Heart right ventricle (tissue), 16 donors: ENCODE measurements at regions of chr5 and their contacts with region 1.

Region 1: DNA sequence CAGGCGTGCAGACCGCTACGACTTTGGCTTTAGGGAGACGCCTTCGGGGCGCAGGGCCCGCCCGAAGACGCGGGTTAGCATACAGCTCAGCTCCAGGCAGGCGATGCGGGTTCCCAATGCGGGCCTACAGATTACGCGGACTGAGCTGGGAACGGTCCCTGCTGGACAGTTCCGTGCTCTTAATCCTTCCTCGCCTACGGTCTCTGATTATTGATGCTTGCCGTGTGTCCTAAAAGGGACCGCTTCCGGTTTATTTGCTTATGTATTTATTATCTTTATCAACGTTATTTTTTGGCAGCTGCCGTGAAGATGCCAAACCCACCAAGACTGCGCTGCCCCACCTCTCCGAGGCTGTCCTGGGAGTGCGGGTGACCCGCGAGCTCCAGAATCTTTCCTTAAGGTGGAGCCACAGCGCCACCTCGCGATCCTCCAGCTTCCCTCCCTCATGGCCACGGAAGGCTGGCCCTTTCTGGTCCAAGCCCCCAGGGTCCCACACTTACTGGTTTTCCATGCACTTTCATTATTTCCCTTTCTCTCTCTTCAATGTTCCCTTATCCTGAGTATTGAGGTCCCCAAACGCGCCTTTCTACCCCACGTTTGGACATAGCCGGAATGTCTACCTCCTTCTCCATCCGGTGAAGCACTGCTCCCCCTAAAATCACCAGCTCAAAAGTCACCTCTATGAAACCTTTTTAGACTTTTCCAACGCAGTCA is 7.0 kb upstream of the EBF1 start:
- DNase-seq: peak; percentile 81 to 85
- ATAC-seq: peak; percentile 84 to 93 (median 90)
- H3K4me3 ChIP-seq: peak overlapping the region in 9 of 10 donors; percentile 1 to 55 (median 41)
- H3K27ac ChIP-seq: peak overlapping the region in 4 of 10 donors; percentile 1 to 35 (median 20)
- H3K4me1 ChIP-seq: peaks cover 0 to 51% (median 27%) of the 10 kb centered on the region in 9 donors
- H3K27me3 ChIP-seq: peaks cover 4 to 82% (median 48%) of the 10 kb centered on the region in 7 donors
- CTCF ChIP-seq: peak; percentile 71 to 97 (median 96)

Region 2: DNA sequence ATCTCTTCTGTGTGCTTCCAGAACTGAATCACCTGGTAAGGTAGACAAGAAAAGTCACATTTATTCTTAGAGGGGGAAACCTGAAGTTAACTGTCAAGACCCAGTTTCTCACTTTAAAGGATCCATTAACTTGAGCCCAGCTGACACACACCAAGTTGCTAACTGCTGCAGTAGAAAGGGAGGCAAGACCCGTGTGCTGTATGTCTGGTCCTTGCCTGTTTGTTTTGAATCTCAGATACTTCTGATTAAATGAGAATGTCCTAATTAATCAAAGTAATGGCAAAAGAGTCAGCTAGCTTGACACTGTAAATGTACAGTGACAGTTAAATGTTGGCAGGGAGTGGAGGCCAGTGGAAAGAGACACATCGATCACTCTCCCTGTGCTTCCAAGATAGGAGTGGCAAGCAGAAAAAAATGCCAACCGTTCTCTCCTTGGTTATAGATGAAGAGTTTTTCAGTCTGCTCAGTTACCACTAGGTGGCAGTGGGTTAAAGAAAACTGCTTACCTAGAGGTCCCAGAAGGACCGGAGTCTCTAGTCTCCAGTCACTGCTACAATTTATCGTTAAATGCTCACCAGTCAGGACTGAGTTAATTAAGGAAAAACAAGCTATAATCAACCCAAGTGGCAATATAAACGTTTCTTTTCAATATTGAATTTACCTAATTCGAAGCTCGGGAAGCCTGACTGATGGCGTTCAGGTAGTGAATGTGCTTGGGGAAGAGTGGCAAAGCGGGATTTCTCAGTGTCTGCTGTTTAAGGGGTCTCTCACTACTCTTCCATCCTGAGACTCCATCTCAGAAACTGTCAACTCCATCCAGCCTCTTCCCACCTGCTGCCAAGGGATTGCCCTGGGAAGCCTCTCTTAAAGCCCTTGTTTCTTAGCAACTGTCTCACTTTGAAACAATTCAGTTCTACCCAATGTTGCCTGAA is 1344.8 kb before region 1 on chr5:
- intact Hi-C with region 1: loop called in 1 of 10 experiments (anchors 10 kb)
- DNase-seq: peak in 1 of 2 donors; percentile 35
- ATAC-seq: peak; percentile 42 to 89 (median 68)
- H3K4me3 ChIP-seq: no peak overlapping the region
- H3K27ac ChIP-seq: no peak overlapping the region
- H3K4me1 ChIP-seq: peaks cover 0 to 5% (median 0%) of the 10 kb centered on the region in 9 donors
- H3K27me3 ChIP-seq: no peaks in the 10 kb centered on the region
- CTCF ChIP-seq: peak; percentile 46 to 85 (median 81)

Region 3: DNA sequence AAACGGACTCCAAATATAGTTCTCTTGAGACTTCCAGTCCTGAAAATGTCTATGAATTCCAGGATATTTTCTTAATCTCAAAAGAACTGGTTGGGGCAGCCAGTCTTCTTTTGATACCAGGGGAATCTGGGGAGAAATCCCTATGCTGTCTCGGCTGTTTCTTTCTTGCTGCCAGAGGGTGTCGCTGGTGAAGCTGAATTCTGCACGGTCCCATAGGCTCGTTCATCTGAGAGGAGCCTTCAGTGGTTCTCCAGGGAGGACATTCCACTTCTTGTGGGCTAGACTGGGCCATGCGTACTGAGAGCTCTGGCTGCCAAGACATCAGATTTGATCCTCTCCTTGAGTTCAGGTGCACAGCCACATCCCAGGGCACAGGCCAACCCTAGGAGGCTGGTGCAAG is 1092.8 kb before region 1 on chr5:
- intact Hi-C with region 1: loop called in 3 of 10 experiments (anchors 10 kb)
- DNase-seq: peak in 1 of 2 donors; percentile 32
- ATAC-seq: peak in 6 of 8 donors; percentile 47 to 71 (median 56)
- H3K4me3 ChIP-seq: no peak overlapping the region
- H3K27ac ChIP-seq: no peak overlapping the region
- H3K4me1 ChIP-seq: peaks cover 0 to 5% (median 0%) of the 10 kb centered on the region in 9 donors
- H3K27me3 ChIP-seq: peaks cover 0 to 4% (median 0%) of the 10 kb centered on the region in 7 donors
- CTCF ChIP-seq: peak in 7 of 9 donors; percentile 26 to 57 (median 44)

Region 4: GRCh38 chr5:158084292-158084691 is 1022.4 kb before region 1 on chr5:
- intact Hi-C with region 1: loop called in 6 of 10 experiments (anchors 5 to 10 kb)
- DNase-seq: no peak
- ATAC-seq: no peak
- H3K4me3 ChIP-seq: no peak overlapping the region
- H3K27ac ChIP-seq: no peak overlapping the region
- H3K4me1 ChIP-seq: peaks cover 0 to 9% (median 0%) of the 10 kb centered on the region in 9 donors
- H3K27me3 ChIP-seq: no peaks in the 10 kb centered on the region
- CTCF ChIP-seq: no peak

Region 5: DNA sequence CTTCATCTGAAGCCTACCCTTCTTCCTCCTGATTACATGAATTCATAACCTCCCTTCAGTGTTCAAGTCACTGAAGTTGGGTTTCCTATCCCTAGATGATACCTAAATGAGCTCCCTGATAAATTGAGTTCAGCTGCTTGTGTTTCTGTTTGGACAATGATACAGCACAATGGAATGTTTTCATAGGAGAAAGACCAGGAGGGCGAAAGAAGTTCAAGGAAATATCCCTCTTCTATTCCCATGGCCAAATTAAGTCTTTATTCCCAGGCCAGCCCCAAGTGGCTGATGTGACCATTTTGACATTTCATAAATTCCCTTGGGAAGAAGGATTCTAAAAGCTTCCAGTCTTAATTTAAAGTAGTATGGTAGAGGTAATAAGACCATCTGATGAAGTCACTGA is 691.9 kb before region 1 on chr5:
- intact Hi-C with region 1: loop called in 1 of 10 experiments (anchors 10 kb)
- DNase-seq: peak in 1 of 2 donors; percentile 35
- ATAC-seq: peak; percentile 71 to 91 (median 83)
- H3K4me3 ChIP-seq: no peak overlapping the region
- H3K27ac ChIP-seq: peak overlapping the region in 9 of 10 donors; percentile 1 to 60 (median 48)
- H3K4me1 ChIP-seq: peaks cover 0 to 22% (median 13%) of the 10 kb centered on the region in 9 donors
- H3K27me3 ChIP-seq: no peaks in the 10 kb centered on the region
- CTCF ChIP-seq: no peak